ENCODE measurements at regions of chr5 and their contacts with region 1.

Region 1: GRCh38 chr5:923281-923873 is 30.7 kb downstream of the TRIP13 start:
- DNase-seq: peak; percentile 91

Region 2: GRCh38 chr5:873328-873727 is 50.0 kb before region 1 on chr5:
- CTCF ChIA-PET with region 1: no interaction called
- POLR2A ChIA-PET with region 1: no interaction called
- DNase-seq: no peak

Region 3: DNA sequence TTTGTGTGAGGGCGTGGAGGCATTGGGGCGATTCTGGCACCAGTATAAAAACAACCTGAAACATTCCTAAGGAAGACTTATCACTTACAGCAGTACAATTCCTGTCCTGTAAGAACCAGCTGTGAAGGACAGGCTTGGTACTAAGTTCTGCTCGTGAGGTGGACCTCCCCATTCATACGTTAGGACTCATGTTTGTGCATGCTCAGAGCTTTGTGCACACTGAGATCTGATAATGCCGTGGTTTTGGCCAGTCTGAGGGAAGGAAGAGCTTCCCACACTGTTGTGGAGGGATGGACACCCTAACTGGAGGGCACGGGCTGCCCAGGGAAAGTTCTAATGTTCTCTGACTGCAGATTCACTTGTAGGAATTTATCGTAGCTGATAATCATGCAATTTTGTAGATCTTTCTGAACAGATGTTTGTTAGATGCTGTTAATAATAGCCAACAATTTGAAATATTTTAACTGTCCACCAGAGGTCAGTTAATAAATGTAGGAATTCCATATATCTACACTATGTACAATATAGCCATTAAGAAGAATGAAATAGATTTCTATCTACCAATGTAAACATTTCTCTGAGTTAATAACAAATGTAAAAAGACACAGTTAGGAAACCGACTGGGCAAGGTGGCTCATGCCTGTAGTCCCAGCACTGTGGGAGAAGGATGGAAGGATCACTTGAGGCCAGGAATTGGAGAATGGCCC is 27.8 kb before region 1 on chr5:
- CTCF ChIA-PET with region 1: no interaction called
- POLR2A ChIA-PET with region 1: no interaction called
- DNase-seq: no peak

Region 4: DNA sequence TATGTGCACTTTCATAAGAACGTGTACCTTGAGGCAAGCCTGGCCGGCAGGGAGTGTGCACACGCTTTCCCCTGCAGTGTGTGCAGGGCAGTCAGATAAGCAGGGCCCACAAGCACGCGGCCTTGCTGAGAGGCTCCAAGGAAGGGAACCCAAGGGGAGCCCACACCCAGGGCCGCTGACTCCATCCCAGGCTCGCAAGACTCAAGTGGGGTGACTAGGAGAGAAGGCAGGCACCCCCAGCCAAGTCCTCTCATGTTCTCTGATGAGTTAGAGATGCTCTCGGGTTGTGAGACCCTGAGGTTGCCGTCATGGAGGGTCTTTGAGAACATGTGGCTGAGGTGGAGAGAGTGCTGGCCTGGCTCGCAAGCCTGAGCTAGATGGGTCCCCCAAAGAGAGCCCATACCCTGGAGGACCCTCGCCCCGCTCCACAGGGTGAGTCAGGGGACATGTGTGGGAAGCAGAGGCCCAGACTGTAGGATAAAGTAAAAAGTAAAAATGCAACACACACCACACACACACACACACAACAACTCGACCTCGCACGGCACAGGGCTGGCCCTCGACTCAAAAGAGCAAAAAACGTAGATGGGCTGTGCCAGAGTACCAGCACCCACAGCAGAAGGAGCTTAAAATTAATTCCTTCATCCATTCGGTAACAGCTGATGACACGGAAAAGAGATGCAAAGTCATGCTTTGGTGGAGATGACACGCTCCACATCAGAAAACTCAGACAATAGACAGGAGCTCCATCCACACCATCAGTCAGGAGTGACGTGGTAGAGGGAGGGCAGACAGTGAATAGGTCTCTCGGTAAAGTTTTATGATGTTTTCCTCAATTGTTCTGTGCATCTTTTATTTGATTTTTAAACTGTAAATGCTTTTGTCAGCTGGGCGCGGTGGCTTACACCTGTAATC is 30.4 kb after region 1 on chr5:
- CTCF ChIA-PET with region 1: no interaction called
- POLR2A ChIA-PET with region 1: no interaction called
- DNase-seq: no peak

Region 5: DNA sequence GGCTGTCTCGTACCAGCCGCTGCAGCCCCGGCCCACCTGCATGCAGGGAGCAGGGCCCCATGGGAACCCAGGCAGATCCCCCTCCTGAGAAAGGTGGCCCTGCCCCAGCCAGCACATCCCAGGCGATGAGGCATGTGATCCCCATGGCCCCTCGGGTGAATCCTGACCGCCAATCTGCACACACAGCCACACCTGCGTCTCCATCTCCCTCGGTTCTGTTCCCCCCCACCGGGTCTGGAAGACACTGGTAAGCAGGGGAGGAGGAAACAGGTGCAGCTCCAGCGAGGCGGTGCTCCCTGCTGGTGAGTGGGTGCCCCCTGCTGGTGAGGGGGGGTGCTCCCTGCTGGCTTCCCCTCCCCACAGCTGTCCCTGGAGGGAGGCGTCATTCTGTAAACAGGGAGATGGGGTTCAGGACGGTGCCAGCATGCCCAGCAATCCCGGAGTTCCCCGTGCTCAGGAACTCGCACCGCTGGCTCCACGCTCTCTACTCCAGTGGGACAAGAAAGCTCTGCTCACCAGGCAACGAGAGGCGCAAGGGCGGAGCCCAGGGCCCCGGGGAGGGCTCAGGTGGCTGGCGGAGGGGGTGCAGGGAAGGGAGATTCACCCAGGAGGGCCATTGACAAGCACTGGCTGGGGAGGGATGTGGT is 216.9 kb after region 1 on chr5:
- CTCF ChIA-PET with region 1: interaction called, 11 read pairs
- POLR2A ChIA-PET with region 1: no interaction called
- DNase-seq: peak; percentile 56

Measured in HEK293T (cell line).